Mammary epithelial cell (primary cell): ENCODE measurements at regions of chr7 and their contacts with region 1.

Region 1: DNA sequence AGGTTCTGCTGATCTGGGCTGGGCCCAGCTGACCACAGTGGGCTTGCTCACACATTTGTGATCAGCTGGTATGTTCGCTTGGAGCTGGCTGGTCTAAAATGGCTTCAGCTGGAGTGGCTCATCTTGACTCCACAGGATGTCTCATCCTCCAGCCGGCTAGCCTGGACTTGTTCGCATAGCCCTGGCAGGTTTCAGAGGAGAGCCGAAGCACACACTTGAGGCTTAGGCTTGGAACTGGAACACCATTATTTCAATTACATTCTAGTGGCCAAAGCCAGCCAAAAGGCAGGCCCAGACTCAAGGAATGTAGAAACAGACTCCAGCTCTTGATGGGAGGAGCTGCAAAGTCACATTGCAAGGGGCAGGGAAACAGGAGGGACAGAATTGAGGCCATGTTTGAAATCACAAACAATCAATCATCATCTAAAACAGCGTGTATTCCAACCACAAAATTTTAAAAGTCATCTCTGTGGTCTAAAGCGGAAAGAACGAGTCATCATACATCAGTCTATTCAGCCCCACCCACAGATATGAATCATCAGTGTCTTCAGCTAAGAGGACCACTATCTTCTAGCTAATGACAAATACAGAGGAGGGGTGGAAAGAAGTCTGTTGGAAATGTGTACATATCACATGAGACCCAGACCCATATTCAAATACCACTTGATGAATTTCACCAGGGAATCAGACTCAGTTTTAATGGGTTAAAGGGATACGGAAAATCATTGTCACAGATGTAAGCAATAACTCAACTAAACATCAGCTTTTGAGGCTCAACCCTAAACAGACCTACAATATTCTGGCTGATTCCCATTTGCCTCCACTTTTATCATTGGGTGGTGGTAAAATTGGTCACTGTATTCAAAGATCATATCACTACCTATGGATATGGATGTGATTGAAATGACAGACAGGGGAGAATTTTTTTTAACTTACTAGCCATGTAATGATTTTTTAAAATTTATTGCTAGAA is 139.0 kb upstream of the MKLN1 start:
- DNase-seq: peak; percentile 99
- H3K4me3 ChIP-seq: no peak overlapping the region
- H3K27ac ChIP-seq: peak overlapping the region; percentile 84
- H3K4me1 ChIP-seq: peaks cover 30% of the 10 kb centered on the region
- H3K27me3 ChIP-seq: no peaks in the 10 kb centered on the region
- CTCF ChIP-seq: no peak

Region 2: DNA sequence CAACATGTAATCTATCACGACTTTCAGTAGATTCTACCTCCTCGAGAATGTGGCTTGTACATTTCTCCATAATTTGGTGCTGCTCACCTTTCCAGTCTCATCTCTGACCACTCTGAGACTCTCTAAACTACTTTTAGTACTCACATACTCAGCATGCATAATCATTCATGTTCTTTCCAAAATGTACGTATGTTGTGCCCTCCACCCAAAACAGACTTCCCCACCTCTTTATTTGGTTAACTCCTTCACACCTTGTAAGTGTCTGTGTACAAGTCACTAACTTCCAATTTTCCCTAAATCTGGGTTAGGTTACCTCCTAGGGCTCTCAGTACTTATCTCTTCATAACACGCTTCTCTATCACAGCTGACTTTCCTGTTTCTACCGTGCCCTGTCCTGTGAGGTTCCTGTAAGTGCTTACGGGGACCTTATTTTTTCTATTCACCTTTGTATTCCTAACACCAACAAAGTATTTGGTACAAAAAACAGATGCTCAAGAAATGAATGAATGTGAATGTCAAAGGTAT is 47.1 kb before region 1 on chr7:
- CTCF ChIA-PET with region 1: no interaction called
- dilution Hi-C with region 1: loop called (anchors 5 kb)
- in situ Hi-C with region 1: no loop called
- intact Hi-C with region 1: no loop called
- DNase-seq: no peak
- H3K4me3 ChIP-seq: no peak overlapping the region
- H3K27ac ChIP-seq: no peak overlapping the region
- H3K4me1 ChIP-seq: no peaks in the 10 kb centered on the region
- H3K27me3 ChIP-seq: no peaks in the 10 kb centered on the region
- CTCF ChIP-seq: no peak

Region 3: GRCh38 chr7:131265227-131265626 is 76.6 kb after region 1 on chr7:
- CTCF ChIA-PET with region 1: no interaction called
- dilution Hi-C with region 1: loop called (anchors 5 kb)
- in situ Hi-C with region 1: no loop called
- intact Hi-C with region 1: no loop called
- DNase-seq: no peak
- H3K4me3 ChIP-seq: no peak overlapping the region
- H3K27ac ChIP-seq: no peak overlapping the region
- H3K4me1 ChIP-seq: no peaks in the 10 kb centered on the region
- H3K27me3 ChIP-seq: no peaks in the 10 kb centered on the region
- CTCF ChIP-seq: no peak

Region 4: DNA sequence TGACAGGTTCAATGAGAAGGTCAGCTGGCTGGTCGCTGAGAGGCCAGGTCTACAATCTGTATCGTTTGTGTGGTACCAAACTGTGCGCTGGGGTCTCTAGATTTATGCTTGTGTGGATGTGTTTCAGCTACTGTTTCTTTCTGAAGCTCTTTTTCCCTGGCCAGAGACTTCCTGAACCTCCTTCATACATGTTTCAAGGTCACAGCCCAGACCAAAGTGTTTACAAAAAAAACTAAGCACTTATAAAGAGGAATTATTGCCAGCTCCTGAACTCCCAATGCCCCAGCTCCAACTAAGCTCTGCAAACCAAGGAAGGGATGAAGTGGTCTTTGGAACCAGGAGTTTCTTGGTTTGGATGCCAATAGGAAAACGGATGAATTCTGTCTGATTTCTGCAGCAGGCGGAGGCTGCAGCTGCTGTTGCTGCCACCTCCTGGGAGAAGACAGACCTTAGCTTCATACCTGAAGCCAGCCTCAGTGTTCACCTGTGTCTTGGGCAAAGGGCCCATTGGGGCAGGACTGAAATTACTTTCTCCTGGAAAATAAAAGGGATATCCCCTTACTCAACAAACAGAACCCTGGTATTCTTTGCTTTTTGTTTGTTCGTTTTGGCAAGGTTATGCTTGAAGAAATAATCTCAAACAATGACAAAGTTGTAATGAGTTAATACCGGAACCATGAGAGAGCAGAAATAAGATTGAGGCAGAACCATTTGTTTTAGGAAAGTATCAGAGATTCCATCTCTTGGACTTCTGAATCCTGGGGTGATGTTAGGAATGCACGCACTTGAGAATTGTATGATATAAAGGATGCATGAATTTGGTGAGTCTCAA is 114.4 kb after region 1 on chr7:
- CTCF ChIA-PET with region 1: interaction called, 5 read pairs
- dilution Hi-C with region 1: no loop called
- in situ Hi-C with region 1: no loop called
- intact Hi-C with region 1: loop called (anchors 1 kb)
- DNase-seq: peak; percentile 38
- H3K4me3 ChIP-seq: no peak overlapping the region
- H3K27ac ChIP-seq: no peak overlapping the region
- H3K4me1 ChIP-seq: no peaks in the 10 kb centered on the region
- H3K27me3 ChIP-seq: no peaks in the 10 kb centered on the region
- CTCF ChIP-seq: peak; percentile 73 to 86